PC-3 (cell line): ENCODE measurements at regions of chr18 and their contacts with region 1.

Region 1: DNA sequence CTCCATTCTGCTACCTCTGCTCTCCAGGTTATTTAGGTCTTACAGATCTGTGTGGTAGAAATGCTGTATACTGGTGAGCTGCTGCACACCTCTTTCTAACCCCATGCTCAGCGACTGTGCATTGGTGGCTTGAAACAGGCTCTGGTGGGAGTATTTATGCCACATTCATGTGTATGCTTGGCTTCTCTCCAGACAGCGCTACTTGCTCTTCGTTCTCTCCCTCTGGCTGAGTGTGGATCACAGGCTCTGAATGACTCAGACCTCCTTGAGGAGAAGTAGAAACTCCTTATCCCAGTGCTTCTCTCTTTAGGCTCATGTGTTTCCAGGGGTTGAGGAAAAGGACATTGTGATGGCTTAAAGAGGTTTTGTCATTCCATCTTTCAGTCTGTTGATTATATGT is 54.9 kb downstream of the FHOD3 start:
- DNase-seq: peak; percentile 72
- ATAC-seq: peak; percentile 74
- H3K4me3 ChIP-seq: no peak overlapping the region
- H3K27ac ChIP-seq: 0 out of 2 replicates have a peak overlapping the region, but pooled peaks have one; percentile 23
- H3K4me1 ChIP-seq: peaks cover 31% of the 10 kb centered on the region
- H3K27me3 ChIP-seq: no peaks in the 10 kb centered on the region
- CTCF ChIP-seq: no peak

Region 2: GRCh38 chr18:36309436-36310391 is 42.7 kb before region 1 on chr18:
- CTCF ChIA-PET with region 1: no interaction called
- POLR2A ChIA-PET with region 1: no interaction called
- intact Hi-C with region 1: loop called (anchors 5 kb)
- DNase-seq: peak; percentile 86
- ATAC-seq: peak; percentile 87
- H3K4me3 ChIP-seq: no peak overlapping the region
- H3K27ac ChIP-seq: peak overlapping the region; percentile 100
- H3K4me1 ChIP-seq: peaks cover 78% of the 10 kb centered on the region
- H3K27me3 ChIP-seq: no peaks in the 10 kb centered on the region
- CTCF ChIP-seq: no peak